GM10248 (cell line): ENCODE measurements at regions of chr10 and their contacts with region 1.

Region 1: GRCh38 chr10:14185316-14186045 is 145.2 kb downstream of the FRMD4A start:
- DNase-seq: peak; percentile 51
- CTCF ChIP-seq: peak; percentile 34

Region 2: DNA sequence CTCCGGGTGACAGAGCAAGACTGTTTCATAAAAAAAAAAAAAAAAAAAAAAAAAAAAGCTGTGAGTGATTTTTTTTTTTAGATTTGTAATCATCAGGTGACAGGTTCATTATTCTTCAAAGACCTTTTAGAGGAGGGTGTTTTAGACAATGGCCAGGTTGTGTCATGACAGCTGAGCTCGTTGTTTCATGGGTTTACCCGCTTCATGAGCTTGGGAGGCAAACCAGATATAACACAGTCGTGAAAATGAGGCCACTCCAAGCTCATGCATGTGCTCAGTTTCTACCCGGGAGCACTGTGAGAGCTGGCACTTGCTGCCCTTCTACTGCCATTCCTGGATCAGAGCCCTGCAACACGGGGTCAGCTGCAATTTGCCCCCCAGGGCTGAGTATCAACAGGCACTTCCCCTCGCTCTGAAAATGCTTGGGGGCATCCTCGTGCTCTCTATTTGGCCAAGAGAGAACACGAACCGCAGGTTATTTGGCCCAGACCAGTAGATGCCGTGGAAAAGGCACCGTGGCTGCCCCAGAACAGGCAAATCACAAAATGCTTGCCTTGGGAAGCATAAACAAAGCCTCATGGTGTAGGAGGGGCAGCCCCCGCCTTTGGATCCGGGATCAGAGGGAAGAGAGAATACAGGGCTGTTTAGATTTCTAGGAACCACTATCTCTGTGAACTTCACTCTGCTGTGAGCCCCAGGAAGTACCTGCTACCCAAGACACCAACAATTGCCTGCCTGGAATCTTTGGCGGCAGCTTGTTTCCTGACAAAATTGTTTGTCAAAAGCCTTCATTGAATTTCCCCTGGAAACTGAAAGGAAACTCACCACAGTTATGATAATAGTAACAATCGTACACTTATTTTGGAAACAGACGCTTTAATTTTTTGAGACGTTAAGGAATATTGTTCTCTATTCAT is 225.8 kb before region 1 on chr10:
- CTCF ChIA-PET with region 1: no interaction called
- POLR2A ChIA-PET with region 1: interaction called, 12 read pairs
- DNase-seq: no peak
- CTCF ChIP-seq: no peak

Region 3: GRCh38 chr10:13987446-13987845 is 198.0 kb before region 1 on chr10:
- CTCF ChIA-PET with region 1: no interaction called
- POLR2A ChIA-PET with region 1: no interaction called
- DNase-seq: no peak
- CTCF ChIP-seq: no peak

Region 4: GRCh38 chr10:14173706-14174594 is 11.5 kb before region 1 on chr10:
- CTCF ChIA-PET with region 1: interaction called, 5 read pairs
- POLR2A ChIA-PET with region 1: interaction called, 10 read pairs
- DNase-seq: no peak
- CTCF ChIP-seq: no peak

Region 5: DNA sequence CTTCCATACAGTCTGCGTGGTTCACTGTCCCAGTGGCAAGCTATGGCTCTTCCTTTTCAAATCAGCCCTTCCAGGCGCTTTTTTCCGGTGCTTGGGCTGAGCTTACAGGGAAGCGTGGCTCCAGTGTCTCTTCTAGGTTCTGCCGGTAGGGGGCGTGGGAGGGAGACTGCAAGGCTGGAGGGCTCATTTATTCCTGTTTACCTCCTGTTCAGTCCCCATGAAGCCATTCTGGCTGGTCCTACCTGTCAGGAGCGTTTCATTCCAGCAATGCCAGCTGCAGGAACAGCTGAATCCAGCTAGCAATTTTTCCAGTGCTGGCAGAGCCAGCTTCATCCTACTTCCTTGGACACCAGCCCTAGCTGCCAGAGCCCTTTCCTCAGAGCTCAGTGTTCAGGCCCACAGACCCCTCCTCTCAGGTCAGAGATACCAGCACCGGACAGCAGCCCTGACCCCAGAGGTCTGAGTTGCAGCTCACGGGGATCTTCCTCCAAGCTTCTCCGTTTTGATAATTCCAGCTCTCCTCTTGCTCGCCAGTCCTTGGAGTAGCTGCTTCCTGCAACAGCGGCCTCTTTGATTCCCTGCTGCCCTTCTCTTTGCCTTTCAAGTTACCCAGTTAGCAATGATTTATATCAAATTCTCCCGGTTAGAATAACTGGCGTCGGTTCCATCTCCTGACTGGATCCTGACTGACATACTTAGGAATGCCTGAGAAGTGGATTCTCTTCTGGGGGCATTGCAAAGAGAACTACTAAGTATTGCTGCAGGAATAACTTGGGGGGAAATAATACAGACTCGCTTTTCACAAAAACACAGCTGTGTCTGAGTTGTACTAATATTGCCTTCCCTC is 15.4 kb after region 1 on chr10:
- CTCF ChIA-PET with region 1: interaction called, 99 read pairs
- POLR2A ChIA-PET with region 1: interaction called, 23 read pairs
- DNase-seq: no peak
- CTCF ChIP-seq: no peak